ENCODE measurements at regions of chr4 and their contacts with region 1.

Region 1: DNA sequence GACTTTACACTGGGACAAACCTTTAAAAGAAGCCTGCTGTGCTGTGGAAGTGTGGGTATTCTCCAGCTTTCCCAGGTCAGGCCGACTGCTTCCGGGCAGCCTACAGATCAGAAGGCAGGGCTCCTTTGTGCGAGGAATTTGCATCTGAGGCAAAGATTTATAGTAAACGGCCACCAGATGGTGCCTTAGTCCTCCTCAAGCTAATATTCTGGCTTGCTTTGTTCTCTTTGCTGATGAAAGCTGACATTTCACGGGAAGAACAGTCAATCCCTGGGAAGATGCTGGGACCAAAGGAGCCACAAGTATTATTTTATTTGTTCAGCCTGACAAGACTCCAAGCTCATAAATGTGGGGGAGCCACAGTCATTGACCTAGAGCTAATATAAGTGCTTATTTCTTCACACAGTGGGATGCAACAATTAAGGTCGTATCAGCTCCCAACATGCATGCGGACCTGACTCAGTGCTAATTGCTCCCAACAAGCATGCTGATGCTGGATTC is 120.7 kb upstream of the TRIM2 start:
- DNase-seq: peak; percentile 41 to 62 (median 56)
- H3K4me3 ChIP-seq: no peak overlapping the region
- H3K4me3 Mint-ChIP-seq: peak overlapping the region in 6 of 8 donors; percentile 1 to 83 (median 64)
- H3K27ac ChIP-seq: no peak overlapping the region
- H3K27ac Mint-ChIP-seq: peak overlapping the region in 5 of 7 donors; percentile 52 to 88 (median 65)
- H3K4me1 ChIP-seq: peaks cover 57% of the 10 kb centered on the region
- H3K4me1 Mint-ChIP-seq: peaks cover 30 to 56% (median 43%) of the 10 kb centered on the region in 4 donors
- H3K27me3 ChIP-seq: no peaks in the 10 kb centered on the region
- H3K27me3 Mint-ChIP-seq: peaks cover 0 to 3% of the 10 kb centered on the region in 2 donors

Region 2: GRCh38 chr4:152408514-152409327 is 674.8 kb before region 1 on chr4:
- CTCF ChIA-PET with region 1: no interaction called
- POLR2A ChIA-PET with region 1: no interaction called
- intact Hi-C with region 1: loop called (anchors 5 kb)
- DNase-seq: peak; percentile 28 to 44 (median 41)
- H3K4me3 ChIP-seq: no peak overlapping the region
- H3K4me3 Mint-ChIP-seq: no peak overlapping the region
- H3K27ac ChIP-seq: no peak overlapping the region
- H3K27ac Mint-ChIP-seq: peak overlapping the region in 5 of 7 donors; percentile 3 to 85 (median 23)
- H3K4me1 ChIP-seq: no peaks in the 10 kb centered on the region
- H3K4me1 Mint-ChIP-seq: peaks cover 18 to 23% (median 20%) of the 10 kb centered on the region in 4 donors
- H3K27me3 ChIP-seq: no peaks in the 10 kb centered on the region
- H3K27me3 Mint-ChIP-seq: no peaks in the 10 kb centered on the region

Region 3: DNA sequence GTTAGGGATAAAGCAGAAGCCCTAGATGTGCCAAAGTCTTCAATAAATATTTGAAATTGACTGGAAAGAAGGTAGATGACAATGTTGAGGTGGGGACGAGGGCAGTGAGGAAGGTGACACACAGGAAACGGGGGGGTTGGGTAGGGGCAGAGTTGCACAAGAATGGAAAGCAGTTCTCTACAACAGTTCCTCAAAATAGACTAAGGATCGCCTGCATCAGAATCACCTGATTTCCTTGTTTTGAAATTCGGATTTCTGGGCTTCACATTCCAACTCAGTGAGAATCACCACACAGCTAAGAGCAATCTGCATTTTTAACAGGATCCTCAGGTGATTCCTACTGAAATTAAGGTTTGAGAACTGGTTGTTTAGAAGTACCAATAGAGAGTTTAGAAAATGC is 233.1 kb before region 1 on chr4:
- CTCF ChIA-PET with region 1: interaction called, 32 read pairs
- POLR2A ChIA-PET with region 1: no interaction called
- intact Hi-C with region 1: loop called (anchors 1 kb)
- DNase-seq: no peak
- H3K4me3 ChIP-seq: no peak overlapping the region
- H3K4me3 Mint-ChIP-seq: peak overlapping the region in 1 of 8 donors; percentile 5
- H3K27ac ChIP-seq: no peak overlapping the region
- H3K27ac Mint-ChIP-seq: peak overlapping the region in 1 of 7 donors; percentile 40
- H3K4me1 ChIP-seq: peaks cover 10% of the 10 kb centered on the region
- H3K4me1 Mint-ChIP-seq: peaks cover 15 to 20% (median 17%) of the 10 kb centered on the region in 4 donors
- H3K27me3 ChIP-seq: no peaks in the 10 kb centered on the region
- H3K27me3 Mint-ChIP-seq: no peaks in the 10 kb centered on the region

Region 4: DNA sequence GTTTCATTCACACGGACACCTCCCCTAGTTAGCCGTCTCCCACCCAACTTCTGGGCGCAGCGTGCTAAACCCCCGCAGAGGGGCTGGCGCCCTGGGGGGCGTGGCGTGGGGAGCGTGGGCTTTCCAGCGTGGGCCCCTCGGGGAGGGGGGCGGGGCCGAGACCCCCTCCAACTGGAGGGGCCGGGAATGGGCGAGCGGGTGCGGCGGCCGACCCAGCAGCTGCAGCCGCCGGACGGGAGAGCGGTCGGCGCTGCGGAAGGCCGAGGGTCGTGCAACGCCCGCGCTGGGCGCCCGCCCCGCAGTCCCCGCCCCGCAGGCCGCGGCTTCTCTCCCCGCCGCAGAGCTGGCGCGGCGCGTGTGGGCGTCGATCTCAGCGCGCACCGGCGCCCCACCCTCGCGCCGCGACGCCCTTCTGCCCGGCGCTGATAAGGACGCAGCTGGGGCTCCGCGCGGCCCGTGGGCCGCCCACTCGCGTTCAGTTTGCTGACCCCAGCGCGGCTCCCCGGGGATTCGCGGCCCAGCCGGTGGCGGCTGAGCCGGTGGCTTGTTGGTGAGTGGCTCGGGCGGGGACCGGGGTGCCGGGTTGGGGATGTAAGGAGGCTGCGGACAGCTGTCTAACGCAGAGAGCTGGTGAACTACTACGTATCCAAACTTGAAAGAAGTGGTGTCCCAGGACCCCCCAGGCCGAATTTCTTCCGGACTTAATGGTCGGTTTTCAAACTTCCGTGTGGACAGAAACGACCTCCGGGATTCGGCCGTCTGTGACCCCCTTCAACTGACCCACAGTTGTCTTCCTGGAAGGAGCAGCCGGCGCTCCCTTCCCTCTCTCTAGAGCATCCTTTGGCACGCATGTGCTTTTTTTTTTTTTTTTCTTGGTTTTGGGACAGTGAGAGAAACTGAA is 145.9 kb before region 1 on chr4:
- CTCF ChIA-PET with region 1: no interaction called
- POLR2A ChIA-PET with region 1: no interaction called
- intact Hi-C with region 1: no loop called
- DNase-seq: peak in 2 of 5 donors; percentile 14 to 20
- H3K4me3 ChIP-seq: peak overlapping the region; percentile 36 to 54
- H3K4me3 Mint-ChIP-seq: peak overlapping the region; percentile 77 to 87 (median 84)
- H3K27ac ChIP-seq: no peak overlapping the region
- H3K27ac Mint-ChIP-seq: no peak overlapping the region
- H3K4me1 ChIP-seq: peaks cover 20% of the 10 kb centered on the region
- H3K4me1 Mint-ChIP-seq: peaks cover 13 to 30% (median 21%) of the 10 kb centered on the region in 4 donors
- H3K27me3 ChIP-seq: peaks cover 32% of the 10 kb centered on the region
- H3K27me3 Mint-ChIP-seq: peaks cover 50 to 54% of the 10 kb centered on the region in 2 donors

Region 5: GRCh38 chr4:153115322-153116290 is 32.1 kb after region 1 on chr4:
- CTCF ChIA-PET with region 1: interaction called, 555 read pairs
- POLR2A ChIA-PET with region 1: interaction called, 21 read pairs
- intact Hi-C with region 1: loop called (anchors 1 kb)
- DNase-seq: peak; percentile 85 to 92 (median 89)
- H3K4me3 ChIP-seq: peak overlapping the region in 1 of 2 donors; percentile 37
- H3K4me3 Mint-ChIP-seq: peak overlapping the region in 1 of 8 donors; percentile 74
- H3K27ac ChIP-seq: peak overlapping the region; percentile 68
- H3K27ac Mint-ChIP-seq: no peak overlapping the region
- H3K4me1 ChIP-seq: peaks cover 62% of the 10 kb centered on the region
- H3K4me1 Mint-ChIP-seq: peaks cover 0 to 18% (median 9%) of the 10 kb centered on the region in 4 donors
- H3K27me3 ChIP-seq: no peaks in the 10 kb centered on the region
- H3K27me3 Mint-ChIP-seq: no peaks in the 10 kb centered on the region

Region 6: DNA sequence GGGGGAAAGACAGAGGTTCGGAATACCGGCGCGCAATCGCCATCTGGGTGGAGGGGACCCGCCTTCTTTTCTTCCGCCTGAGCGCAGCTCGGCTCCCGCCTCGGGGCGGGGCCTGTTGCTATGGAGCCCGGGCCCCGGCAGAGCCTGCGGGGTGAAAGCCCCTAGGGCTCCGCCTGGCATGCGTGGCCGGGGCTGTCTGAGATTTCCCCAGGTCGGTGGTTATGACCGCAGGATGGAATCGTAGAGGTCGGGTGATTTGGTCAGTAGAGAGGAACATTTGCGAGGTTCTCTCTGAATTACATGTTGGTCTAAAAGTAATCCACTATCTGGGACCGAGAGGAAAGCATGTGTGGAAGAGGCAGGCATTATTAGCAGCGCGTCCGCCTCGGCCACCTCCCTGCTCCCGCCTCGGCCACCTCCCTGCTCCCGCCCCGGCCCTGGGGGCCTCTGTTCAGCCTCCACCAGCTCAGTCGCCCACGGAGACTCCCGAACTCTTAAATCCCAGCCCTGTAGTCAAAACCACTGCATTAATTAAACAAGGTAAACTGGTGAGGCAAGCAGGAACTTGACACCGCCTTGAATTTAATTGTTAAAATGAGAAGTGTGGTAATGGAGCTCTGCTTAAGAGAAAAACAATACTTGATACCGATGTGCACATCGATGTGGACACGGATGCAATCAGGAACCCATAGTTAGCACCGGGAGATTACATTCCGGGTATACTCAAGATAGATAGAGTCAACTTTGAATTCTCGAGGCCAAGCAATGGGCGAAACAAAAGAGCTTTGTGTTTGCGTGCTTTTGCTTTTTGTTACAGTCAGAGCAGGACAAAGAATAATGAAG is 165.9 kb after region 1 on chr4:
- CTCF ChIA-PET with region 1: interaction called, 3 read pairs
- POLR2A ChIA-PET with region 1: no interaction called
- intact Hi-C with region 1: loop called (anchors 5 kb)
- DNase-seq: peak; percentile 86 to 90 (median 87)
- H3K4me3 ChIP-seq: peak overlapping the region; percentile 63 to 64
- H3K4me3 Mint-ChIP-seq: peak overlapping the region; percentile 89 to 95 (median 94)
- H3K27ac ChIP-seq: peak overlapping the region; percentile 73
- H3K27ac Mint-ChIP-seq: peak overlapping the region; percentile 89 to 97 (median 97)
- H3K4me1 ChIP-seq: peaks cover 17% of the 10 kb centered on the region
- H3K4me1 Mint-ChIP-seq: peaks cover 17 to 43% (median 31%) of the 10 kb centered on the region in 4 donors
- H3K27me3 ChIP-seq: no peaks in the 10 kb centered on the region
- H3K27me3 Mint-ChIP-seq: peaks cover 0 to 2% of the 10 kb centered on the region in 2 donors

Region 7: GRCh38 chr4:153643406-153644383 is 560.2 kb after region 1 on chr4:
- CTCF ChIA-PET with region 1: interaction called, 13 read pairs
- POLR2A ChIA-PET with region 1: no interaction called
- intact Hi-C with region 1: loop called (anchors 2 kb)
- DNase-seq: peak in 4 of 5 donors; percentile 54 to 65 (median 62)
- H3K4me3 ChIP-seq: no peak overlapping the region
- H3K4me3 Mint-ChIP-seq: peak overlapping the region in 3 of 8 donors; percentile 8 to 62 (median 35)
- H3K27ac ChIP-seq: no peak overlapping the region
- H3K27ac Mint-ChIP-seq: peak overlapping the region in 3 of 7 donors; percentile 19 to 93 (median 46)
- H3K4me1 ChIP-seq: peaks cover 6% of the 10 kb centered on the region
- H3K4me1 Mint-ChIP-seq: peaks cover 7 to 15% (median 10%) of the 10 kb centered on the region in 4 donors
- H3K27me3 ChIP-seq: no peaks in the 10 kb centered on the region
- H3K27me3 Mint-ChIP-seq: no peaks in the 10 kb centered on the region

Measured in CD4-positive, alpha-beta memory T cell (primary cell).